Heart left ventricle (tissue), 16 donors: ENCODE measurements at regions of chr10 and their contacts with region 1.

Region 1: DNA sequence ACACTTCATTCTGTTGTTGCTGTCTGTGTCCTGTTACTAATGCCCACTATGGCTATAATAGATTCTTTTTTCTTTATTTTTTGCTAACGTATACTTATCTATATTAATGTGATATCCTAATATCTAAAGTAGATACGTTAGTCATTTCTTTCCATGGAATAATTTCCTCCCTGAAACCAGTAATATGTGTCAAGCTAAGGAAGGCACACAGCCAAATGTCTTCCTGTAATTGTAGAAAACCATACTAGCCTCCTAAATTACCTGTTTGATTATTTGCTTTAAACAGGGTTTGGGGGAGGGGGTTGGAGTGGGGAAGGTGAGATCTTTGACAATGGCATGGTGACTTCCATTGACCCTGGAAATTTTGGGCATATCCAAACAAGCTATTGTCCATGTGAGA is 56.4 kb downstream of the THNSL1 start:
- DNase-seq: no peak
- ATAC-seq: no peak
- H3K4me3 ChIP-seq: no peak overlapping the region
- H3K27ac ChIP-seq: no peak overlapping the region
- H3K4me1 ChIP-seq: no peaks in the 10 kb centered on the region
- H3K27me3 ChIP-seq: no peaks in the 10 kb centered on the region
- CTCF ChIP-seq: no peak
- POLR2A ChIP-seq: no peak

Region 2: GRCh38 chr10:25033126-25033525 is 39.7 kb before region 1 on chr10:
- intact Hi-C with region 1: loop called in 1 of 10 experiments (anchors 5 kb)
- DNase-seq: no peak
- ATAC-seq: no peak
- H3K4me3 ChIP-seq: no peak overlapping the region
- H3K27ac ChIP-seq: no peak overlapping the region
- H3K4me1 ChIP-seq: peaks cover 0 to 5% (median 0%) of the 10 kb centered on the region in 12 donors
- H3K27me3 ChIP-seq: no peaks in the 10 kb centered on the region
- CTCF ChIP-seq: no peak
- POLR2A ChIP-seq: no peak